ENCODE measurements at regions of chr2 and their contacts with region 1.

Region 1: DNA sequence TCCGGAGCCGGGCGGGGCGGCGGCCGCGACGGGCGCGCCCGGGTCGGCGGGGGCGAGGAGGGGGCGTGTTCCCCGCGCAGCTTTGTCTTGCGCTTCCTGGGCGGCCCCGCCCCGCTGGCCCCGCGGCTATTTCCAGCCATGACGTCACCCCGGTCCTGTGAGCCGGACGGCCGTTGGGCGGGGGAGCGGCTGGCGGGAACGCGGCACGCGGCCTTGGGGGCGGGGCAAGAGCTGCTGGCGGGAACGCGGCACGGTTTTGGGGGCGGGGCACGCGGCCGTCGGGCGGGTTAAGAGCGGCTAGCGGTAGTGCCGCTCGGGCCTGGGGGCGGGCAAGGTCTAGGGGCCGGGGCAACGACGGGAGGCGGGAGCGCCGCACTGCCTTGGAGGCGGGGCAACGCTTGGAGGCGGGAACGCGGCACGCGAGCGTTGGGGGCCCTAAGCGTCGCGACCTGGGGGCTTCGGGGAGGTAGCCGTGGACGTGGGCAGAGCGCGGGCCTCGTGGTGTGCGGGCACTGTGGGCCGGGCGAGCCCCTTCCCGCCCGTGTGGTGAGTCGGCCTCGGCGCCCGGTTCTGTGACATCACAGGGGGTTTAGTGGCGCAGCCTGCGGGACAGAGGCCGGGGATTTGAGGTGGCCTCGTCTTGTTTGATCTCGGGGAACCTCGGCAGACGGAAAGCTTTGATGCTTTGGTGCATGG is 704 bp downstream of the KLF11 start:
- DNase-seq: peak; percentile 91 to 99
- H3K4me3 ChIP-seq: peak overlapping the region; percentile 65 to 81
- H3K27ac ChIP-seq: peak overlapping the region; percentile 97
- H3K4me1 ChIP-seq: peaks cover 6 to 41% of the 10 kb centered on the region in 2 donors
- H3K27me3 ChIP-seq: no peaks in the 10 kb centered on the region
- CTCF ChIP-seq: no peak

Region 2: GRCh38 chr2:9693211-9693520 is 350.9 kb before region 1 on chr2:
- intact Hi-C with region 1: loop called (anchors 5 kb)
- DNase-seq: peak; percentile 75 to 93
- H3K4me3 ChIP-seq: peak overlapping the region; percentile 9 to 34
- H3K27ac ChIP-seq: peak overlapping the region; percentile 70 to 85
- H3K4me1 ChIP-seq: peaks cover 4 to 14% of the 10 kb centered on the region in 2 donors
- H3K27me3 ChIP-seq: no peaks in the 10 kb centered on the region
- CTCF ChIP-seq: no peak

Region 3: DNA sequence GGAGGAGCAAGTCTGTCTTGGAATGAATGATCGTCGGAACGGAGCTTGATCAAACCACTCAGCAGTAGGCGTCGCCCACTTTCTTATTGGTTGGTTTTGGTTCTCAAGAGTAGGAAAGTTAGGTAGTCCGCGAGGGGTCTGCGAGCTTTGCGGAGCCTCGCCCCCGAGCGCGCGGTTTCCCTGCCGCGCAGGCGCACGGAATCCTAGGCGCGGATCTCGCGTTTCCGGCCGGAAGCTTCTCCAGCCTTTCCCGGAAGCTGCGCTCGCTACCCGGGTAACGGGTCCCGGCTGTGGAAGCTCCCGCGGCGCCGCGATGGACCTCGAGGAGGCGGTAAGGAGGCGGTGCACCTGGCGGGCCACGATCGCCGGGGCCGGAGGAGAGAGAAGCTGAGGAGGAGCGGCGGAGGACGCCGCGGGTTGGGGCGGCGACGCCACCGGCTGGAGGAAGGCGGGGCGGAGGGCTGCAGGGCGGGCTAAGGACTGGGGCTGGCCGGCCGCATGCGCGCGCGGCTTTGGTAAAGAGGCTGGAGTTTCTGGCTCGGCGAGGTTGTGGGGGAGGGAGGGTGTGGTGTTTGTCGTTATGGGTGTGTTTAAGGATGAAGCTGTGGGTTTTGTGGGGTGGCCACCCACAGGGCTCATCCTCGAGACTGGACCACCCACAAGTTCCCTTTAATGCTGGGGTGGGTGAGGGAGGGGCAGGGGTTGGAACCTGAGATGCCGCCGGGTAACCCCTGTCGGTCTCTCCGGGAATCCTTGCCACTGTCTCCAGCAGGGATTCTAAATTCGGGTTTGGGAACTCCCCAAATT is 200.6 kb before region 1 on chr2 and contains the start of gene TAF1B:
- intact Hi-C with region 1: loop called (anchors 5 kb)
- DNase-seq: peak in 1 of 2 donors; percentile 87
- H3K4me3 ChIP-seq: peak within 1 kb of the TSS; percentile 92 to 93
- H3K27ac ChIP-seq: peak within 1 kb of the TSS; percentile 87 to 88
- H3K4me1 ChIP-seq: peaks cover 6 to 9% of the 10 kb centered on the region in 2 donors
- H3K27me3 ChIP-seq: no peaks in the 10 kb centered on the region
- CTCF ChIP-seq: peak in 1 of 3 experiments; percentile 11
- total RNA-seq, gene TAF1B: 58.5 TPM

Region 4: DNA sequence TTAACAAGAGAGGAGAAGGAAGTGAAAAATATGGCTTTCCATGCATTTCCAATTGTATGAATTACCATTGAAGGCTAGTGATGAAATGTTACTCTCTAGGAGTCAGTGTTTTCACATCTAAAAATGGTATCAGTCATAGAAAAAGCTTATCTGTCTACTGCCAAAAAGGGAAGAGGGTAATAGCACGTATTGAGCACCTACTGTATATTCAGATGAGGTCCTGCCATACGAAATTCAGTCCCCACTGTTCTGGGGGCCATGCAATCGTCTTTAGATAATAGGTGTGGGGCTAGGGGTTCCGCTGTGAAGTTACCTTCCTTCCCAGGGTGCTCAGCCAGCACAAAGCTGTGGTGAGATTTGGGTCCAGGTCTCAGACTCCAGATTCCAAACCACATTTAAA is 106.8 kb before region 1 on chr2:
- intact Hi-C with region 1: no loop called
- DNase-seq: no peak
- H3K4me3 ChIP-seq: no peak overlapping the region
- H3K27ac ChIP-seq: no peak overlapping the region
- H3K4me1 ChIP-seq: no peaks in the 10 kb centered on the region
- H3K27me3 ChIP-seq: no peaks in the 10 kb centered on the region
- CTCF ChIP-seq: no peak

Region 5: GRCh38 chr2:9984217-9984739 is 59.8 kb before region 1 on chr2:
- intact Hi-C with region 1: loop called (anchors 1 kb)
- DNase-seq: no peak
- H3K4me3 ChIP-seq: no peak overlapping the region
- H3K27ac ChIP-seq: peak overlapping the region; percentile 65 to 76
- H3K4me1 ChIP-seq: peaks cover 9 to 24% of the 10 kb centered on the region in 2 donors
- H3K27me3 ChIP-seq: no peaks in the 10 kb centered on the region
- CTCF ChIP-seq: peak; percentile 80 to 87 (median 83)

Region 6: DNA sequence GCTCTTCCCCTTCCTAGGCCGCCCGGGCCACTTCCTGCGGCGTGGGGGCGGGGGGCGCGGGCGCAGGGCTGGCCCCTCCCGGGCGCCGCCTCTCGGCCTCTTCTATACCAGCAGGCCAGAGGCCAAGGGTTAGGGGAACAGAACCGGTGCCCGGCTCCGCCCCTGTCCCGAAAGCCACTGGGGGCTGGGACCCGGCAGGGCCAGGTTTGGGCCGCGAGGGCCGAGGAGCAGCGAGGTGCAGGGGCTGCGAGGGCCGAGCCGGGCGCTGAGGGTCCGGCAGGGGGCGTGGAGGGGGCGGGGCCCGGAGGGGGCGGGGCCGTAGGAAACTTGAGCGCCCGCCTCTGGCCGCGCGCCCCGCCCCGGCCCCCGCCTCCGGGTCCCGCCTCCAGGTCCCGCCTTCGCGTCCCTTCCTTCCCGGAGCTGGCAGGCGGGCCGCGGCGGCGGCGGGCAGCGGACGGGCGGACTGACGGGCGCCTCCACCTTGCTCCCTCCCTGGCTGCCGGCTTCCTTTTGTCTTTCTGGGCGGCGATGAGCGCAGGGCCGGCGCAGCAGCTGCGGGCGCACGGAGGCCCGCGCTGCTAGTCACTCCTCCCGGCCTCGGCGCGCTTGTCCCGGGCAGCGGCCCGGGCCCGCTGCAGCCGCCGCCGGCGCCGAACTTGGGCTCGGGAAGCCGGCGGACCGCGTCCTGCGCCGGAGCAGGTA is 258.6 kb after region 1 on chr2 and contains the start of gene HPCAL1:
- intact Hi-C with region 1: loop called (anchors 10 kb)
- DNase-seq: peak; percentile 30 to 90
- H3K4me3 ChIP-seq: peak within 1 kb of the TSS; percentile 68 to 92
- H3K27ac ChIP-seq: peak within 1 kb of the TSS; percentile 78 to 84
- H3K4me1 ChIP-seq: peaks cover 0 to 6% of the 10 kb centered on the region in 2 donors
- H3K27me3 ChIP-seq: no peaks in the 10 kb centered on the region
- CTCF ChIP-seq: peak; percentile 50 to 70 (median 59)
- total RNA-seq, gene HPCAL1: 401 TPM

Measured in ascending aorta (tissue), 2 donors.